ENCODE measurements at regions of chr6 and their contacts with region 1.

Region 1: DNA sequence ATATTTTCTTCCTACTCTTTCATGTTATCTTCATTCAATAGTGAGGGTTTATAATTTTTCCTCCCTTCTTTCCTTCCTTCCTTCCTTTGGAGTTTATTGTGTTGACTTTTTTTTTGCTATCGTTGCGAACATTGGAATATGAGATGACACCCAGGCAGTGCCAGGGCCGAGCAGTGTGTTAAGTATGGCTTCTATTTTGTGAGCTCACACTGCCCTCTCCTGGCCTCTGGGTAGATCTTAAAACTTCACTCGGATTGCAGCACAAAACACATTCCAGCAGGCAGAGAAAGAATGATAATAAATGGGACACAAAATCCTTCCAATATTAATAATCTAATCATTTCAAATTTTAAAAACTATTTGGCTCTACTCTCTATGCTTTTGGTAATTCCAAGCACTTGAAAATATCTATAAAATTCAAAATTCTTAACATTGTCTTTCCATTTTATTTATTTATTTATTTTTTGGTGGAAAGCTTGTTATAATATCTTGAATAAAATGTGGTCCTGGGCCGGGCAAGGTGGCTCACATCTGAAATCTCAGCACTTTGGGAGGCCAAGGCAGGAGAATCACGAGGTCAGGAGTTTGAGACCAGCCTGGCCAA is 147.4 kb upstream of the OLIG3 start:
- DNase-seq: peak; percentile 71
- H3K4me3 Mint-ChIP-seq: no peak overlapping the region
- H3K27ac Mint-ChIP-seq: no peak overlapping the region
- H3K4me1 Mint-ChIP-seq: peaks cover 13% of the 10 kb centered on the region
- H3K27me3 Mint-ChIP-seq: peaks cover 4% of the 10 kb centered on the region

Region 2: DNA sequence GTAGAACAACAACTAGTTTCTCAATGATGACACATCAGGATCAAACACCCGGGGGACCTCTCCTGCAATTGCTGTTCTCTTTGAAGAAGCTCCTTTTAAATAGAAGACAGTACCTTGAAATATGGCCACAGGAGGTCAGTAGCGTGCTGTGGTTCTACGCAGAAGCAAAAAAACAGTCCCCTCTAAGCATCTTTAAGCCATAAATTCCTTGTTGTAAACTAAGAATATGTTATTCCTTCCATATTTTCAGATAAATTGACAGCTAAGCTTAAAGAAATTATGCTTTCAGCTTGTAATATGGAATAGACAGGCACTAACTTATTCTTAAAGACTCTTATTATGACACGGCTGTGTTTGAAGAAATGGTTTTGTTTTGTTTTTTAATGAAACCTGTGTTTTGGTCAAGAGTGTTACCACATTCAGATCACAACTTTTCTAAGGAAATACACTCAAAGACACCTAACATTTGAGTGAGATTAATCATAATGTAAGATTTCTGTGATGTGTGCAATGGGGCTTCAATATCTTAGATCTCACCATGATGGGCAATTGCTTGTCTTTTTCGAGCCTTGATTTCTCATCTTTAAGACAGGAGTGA is 547.1 kb before region 1 on chr6:
- CTCF ChIA-PET with region 1: interaction called, 6 read pairs
- POLR2A ChIA-PET with region 1: no interaction called
- intact Hi-C with region 1: loop called (anchors 1 kb)
- DNase-seq: peak; percentile 68
- H3K4me3 Mint-ChIP-seq: no peak overlapping the region
- H3K27ac Mint-ChIP-seq: no peak overlapping the region
- H3K4me1 Mint-ChIP-seq: peaks cover 22% of the 10 kb centered on the region
- H3K27me3 Mint-ChIP-seq: peaks cover 2% of the 10 kb centered on the region

Region 3: DNA sequence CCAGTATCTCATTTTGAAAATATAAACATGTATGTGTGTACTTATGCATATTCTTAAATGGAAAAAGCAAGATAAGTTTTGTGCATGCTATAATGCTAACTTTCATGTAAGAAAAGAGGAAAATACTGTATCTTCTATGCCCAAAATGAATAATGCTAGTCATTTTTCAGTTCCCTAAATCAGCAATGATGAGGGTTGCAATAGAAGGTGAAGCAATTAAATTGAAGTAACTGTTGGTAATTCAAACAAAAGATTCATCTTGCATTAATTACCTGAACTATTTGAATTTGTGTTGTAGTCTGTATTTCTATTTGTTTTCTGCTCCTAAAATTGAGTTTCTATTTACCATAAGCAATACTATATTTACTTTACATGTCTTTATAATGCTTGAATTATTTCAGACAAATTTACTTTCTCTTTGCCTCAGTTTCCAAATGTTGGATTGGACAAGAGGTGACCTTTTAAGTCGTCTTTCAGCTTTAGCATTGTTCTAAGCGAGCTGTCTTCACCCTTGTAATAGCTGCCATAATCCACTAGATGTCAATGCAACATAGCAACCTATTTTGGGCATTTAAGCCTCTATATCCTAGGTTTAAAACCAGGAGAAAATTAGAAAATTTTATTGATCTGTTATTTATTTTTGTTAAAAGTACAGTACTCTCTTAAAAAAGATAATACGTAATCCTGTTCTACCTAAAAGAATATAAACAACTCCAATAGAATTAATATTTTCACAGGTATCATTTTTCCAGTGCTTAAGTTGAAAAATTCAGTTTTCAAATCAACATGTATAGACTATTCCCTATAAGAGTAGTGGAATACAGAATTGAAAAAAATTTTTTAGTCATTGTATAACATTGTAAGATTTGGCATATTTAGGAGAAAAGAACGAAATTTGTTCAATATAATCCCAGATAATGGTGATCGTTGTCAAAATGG is 370.1 kb before region 1 on chr6:
- CTCF ChIA-PET with region 1: interaction called, 6 read pairs
- POLR2A ChIA-PET with region 1: no interaction called
- intact Hi-C with region 1: loop called (anchors 1 kb)
- DNase-seq: no peak
- H3K4me3 Mint-ChIP-seq: no peak overlapping the region
- H3K27ac Mint-ChIP-seq: no peak overlapping the region
- H3K4me1 Mint-ChIP-seq: peaks cover 10% of the 10 kb centered on the region
- H3K27me3 Mint-ChIP-seq: peaks cover 5% of the 10 kb centered on the region

Region 4: GRCh38 chr6:137415127-137415833 is 226.3 kb before region 1 on chr6:
- CTCF ChIA-PET with region 1: no interaction called
- POLR2A ChIA-PET with region 1: no interaction called
- intact Hi-C with region 1: loop called (anchors 2 kb)
- DNase-seq: peak; percentile 78
- H3K4me3 Mint-ChIP-seq: peak overlapping the region; percentile 71
- H3K27ac Mint-ChIP-seq: peak overlapping the region; percentile 49
- H3K4me1 Mint-ChIP-seq: peaks cover 11% of the 10 kb centered on the region
- H3K27me3 Mint-ChIP-seq: peaks cover 3% of the 10 kb centered on the region

Region 5: GRCh38 chr6:137497721-137498463 is 143.7 kb before region 1 on chr6:
- CTCF ChIA-PET with region 1: interaction called, 3 read pairs
- POLR2A ChIA-PET with region 1: no interaction called
- intact Hi-C with region 1: loop called (anchors 5 kb)
- DNase-seq: peak; percentile 32
- H3K4me3 Mint-ChIP-seq: peak overlapping the region; percentile 52
- H3K27ac Mint-ChIP-seq: no peak overlapping the region
- H3K4me1 Mint-ChIP-seq: peaks cover 46% of the 10 kb centered on the region
- H3K27me3 Mint-ChIP-seq: peaks cover 67% of the 10 kb centered on the region

Measured in activated CD4-positive, alpha-beta memory T cell treated with anti-CD3 and anti-CD28 coated beads for 36 hours (primary cell).